ENCODE measurements at regions of chrX and their contacts with region 1.

Region 1: DNA sequence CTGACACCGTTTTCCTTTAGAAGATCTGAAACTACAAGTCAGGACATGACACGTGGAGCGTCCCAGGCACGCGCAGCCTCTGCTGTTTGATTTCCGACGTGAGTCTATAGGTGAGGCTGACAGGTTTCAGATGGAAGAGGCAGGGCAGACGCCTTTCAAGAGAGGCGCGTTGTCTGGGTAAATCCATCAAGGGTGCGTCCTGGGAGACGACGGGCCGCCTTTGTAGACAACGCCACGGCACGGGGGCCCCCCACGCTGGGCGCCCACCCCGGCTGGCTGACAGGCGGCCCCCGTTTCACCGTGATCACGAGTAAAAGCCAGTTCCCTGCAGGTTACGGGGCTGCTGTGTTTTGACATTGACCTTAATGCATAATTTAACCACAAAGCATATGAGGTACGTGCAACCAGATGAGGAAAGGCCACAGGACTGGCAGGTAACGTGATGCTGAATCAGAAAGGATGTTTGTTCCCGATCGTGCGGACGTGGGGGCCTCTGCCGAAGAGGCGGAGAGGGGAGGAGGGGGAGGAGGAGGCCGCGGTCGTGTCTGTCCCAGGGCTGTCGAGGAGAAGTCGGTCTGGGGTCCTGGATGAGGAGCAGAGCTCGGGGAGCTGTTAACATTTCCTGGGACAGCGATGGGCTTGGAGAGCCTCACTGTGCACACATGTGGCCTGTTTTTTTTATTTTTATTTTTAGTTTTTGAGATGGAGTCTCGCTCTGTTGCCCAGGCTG is 51.1 kb upstream of the PPP2R3B start:
- DNase-seq: peak; percentile 45
- H3K4me3 ChIP-seq: peak overlapping the region in 1 of 3 experiments; percentile 14
- H3K27ac ChIP-seq: no peak overlapping the region
- H3K4me1 ChIP-seq: no peaks in the 10 kb centered on the region
- H3K27me3 ChIP-seq: no peaks in the 10 kb centered on the region
- CTCF ChIP-seq: no peak

Region 2: DNA sequence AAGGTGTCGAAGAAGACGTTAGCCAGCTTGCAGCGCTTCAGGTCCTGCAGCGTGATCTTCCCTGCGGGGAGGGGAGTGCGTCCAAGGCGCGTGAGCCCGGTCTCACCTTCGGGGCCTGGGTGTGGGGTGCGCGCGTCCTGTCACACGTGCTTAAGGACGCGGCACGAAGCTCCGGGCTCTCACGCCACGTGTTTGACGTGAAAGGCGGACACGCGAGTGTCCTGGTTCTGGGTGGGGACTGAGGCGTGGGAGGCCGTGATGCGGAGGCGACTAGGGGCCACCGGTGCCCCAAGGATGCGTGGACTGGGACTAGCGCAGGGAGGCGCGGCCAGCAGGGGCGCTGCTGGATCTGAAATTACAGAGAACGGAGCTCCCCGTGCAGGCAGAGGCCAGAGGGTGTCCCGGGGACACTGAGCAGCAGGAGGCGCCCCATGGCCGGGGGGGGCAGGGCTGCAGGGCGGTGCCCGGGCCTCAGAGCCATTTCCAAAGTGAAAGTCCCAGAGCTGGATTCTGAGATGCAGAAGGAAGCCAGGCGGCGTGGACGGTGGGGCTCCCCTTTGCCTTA is 98.9 kb before region 1 on chrX:
- CTCF ChIA-PET with region 1: no interaction called
- dilution Hi-C with region 1: loop called (anchors 5 kb)
- in situ Hi-C with region 1: no loop called
- intact Hi-C with region 1: no loop called
- DNase-seq: no peak
- H3K4me3 ChIP-seq: no peak overlapping the region
- H3K27ac ChIP-seq: no peak overlapping the region
- H3K4me1 ChIP-seq: no peaks in the 10 kb centered on the region
- H3K27me3 ChIP-seq: no peaks in the 10 kb centered on the region
- CTCF ChIP-seq: no peak

Region 3: DNA sequence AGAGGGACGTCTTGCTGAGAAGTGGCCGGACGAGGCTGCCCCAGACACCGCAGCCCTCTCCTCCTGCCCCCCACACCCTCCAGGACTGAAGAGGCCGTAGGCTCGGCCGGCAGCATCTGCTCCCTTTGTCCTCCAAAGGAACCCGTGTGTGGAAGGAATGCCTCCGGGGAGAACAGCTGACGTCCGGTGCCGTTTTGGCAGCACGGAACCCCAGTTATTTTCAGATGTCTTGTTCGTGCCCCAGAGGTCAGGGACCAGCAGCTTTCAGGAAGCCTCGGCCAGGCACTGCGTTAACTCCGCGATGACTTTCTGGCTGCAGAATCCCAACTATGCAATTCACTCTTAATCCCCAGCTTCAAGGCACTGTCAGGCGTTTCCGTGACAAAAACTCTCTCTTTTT is 40.3 kb before region 1 on chrX:
- CTCF ChIA-PET with region 1: no interaction called
- dilution Hi-C with region 1: loop called (anchors 5 kb)
- in situ Hi-C with region 1: no loop called
- intact Hi-C with region 1: no loop called
- DNase-seq: no peak
- H3K4me3 ChIP-seq: no peak overlapping the region
- H3K27ac ChIP-seq: no peak overlapping the region
- H3K4me1 ChIP-seq: no peaks in the 10 kb centered on the region
- H3K27me3 ChIP-seq: no peaks in the 10 kb centered on the region
- CTCF ChIP-seq: no peak

Region 4: GRCh38 chrX:480861-481417 is 43.1 kb after region 1 on chrX:
- CTCF ChIA-PET with region 1: no interaction called
- dilution Hi-C with region 1: loop called (anchors 5 kb)
- in situ Hi-C with region 1: no loop called
- intact Hi-C with region 1: no loop called
- DNase-seq: no peak
- H3K4me3 ChIP-seq: no peak overlapping the region
- H3K27ac ChIP-seq: no peak overlapping the region
- H3K4me1 ChIP-seq: no peaks in the 10 kb centered on the region
- H3K27me3 ChIP-seq: no peaks in the 10 kb centered on the region
- CTCF ChIP-seq: no peak

Region 5: DNA sequence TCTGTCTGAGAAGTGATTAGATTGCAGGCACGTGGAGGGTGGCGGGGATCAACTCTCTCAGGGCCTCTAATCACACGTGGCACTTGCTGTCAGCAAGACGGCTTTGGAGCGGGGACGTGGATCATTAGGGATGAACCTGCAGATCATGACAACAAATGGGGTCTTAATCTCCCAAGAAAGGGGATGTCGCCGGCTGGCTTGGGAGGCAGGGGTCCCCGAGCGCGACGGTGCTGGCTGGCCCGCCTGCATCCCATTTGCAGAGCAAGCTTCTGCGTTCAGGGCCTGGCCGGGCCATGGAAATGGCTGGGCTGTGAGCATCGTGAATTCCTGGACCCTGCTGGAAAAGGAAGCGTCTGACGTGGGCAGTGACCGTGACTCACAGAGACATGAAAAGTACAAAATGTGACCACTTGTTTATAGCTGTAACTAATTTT is 107.6 kb after region 1 on chrX:
- CTCF ChIA-PET with region 1: no interaction called
- dilution Hi-C with region 1: loop called (anchors 10 kb)
- in situ Hi-C with region 1: no loop called
- intact Hi-C with region 1: no loop called
- DNase-seq: no peak
- H3K4me3 ChIP-seq: no peak overlapping the region
- H3K27ac ChIP-seq: no peak overlapping the region
- H3K4me1 ChIP-seq: no peaks in the 10 kb centered on the region
- H3K27me3 ChIP-seq: no peaks in the 10 kb centered on the region
- CTCF ChIP-seq: no peak

Region 6: GRCh38 chrX:599837-600715 is 162.2 kb after region 1 on chrX:
- CTCF ChIA-PET with region 1: no interaction called
- dilution Hi-C with region 1: loop called (anchors 5 kb)
- in situ Hi-C with region 1: no loop called
- intact Hi-C with region 1: no loop called
- DNase-seq: no peak
- H3K4me3 ChIP-seq: no peak overlapping the region
- H3K27ac ChIP-seq: no peak overlapping the region
- H3K4me1 ChIP-seq: no peaks in the 10 kb centered on the region
- H3K27me3 ChIP-seq: no peaks in the 10 kb centered on the region
- CTCF ChIP-seq: no peak

Region 7: GRCh38 chrX:856566-857290 is 418.9 kb after region 1 on chrX:
- CTCF ChIA-PET with region 1: no interaction called
- dilution Hi-C with region 1: no loop called
- in situ Hi-C with region 1: no loop called
- intact Hi-C with region 1: no loop called
- DNase-seq: no peak
- H3K4me3 ChIP-seq: no peak overlapping the region
- H3K27ac ChIP-seq: no peak overlapping the region
- H3K4me1 ChIP-seq: no peaks in the 10 kb centered on the region
- H3K27me3 ChIP-seq: no peaks in the 10 kb centered on the region
- CTCF ChIP-seq: no peak

Measured in mammary epithelial cell (primary cell).